ENCODE measurements at regions of chr11 and their contacts with region 1.

Region 1: GRCh38 chr11:112044961-112045360 is 19.8 kb downstream of the DLAT start:
- DNase-seq: no peak
- ATAC-seq: no peak
- H3K4me3 ChIP-seq: no peak overlapping the region
- H3K4me3 Mint-ChIP-seq: no peak overlapping the region
- H3K27ac ChIP-seq: no peak overlapping the region
- H3K27ac Mint-ChIP-seq: no peak overlapping the region
- H3K4me1 ChIP-seq: no peaks in the 10 kb centered on the region
- H3K4me1 Mint-ChIP-seq: peaks cover 15% of the 10 kb centered on the region
- H3K27me3 ChIP-seq: no peaks in the 10 kb centered on the region
- H3K27me3 Mint-ChIP-seq: no peaks in the 10 kb centered on the region
- CTCF ChIP-seq: no peak

Region 2: DNA sequence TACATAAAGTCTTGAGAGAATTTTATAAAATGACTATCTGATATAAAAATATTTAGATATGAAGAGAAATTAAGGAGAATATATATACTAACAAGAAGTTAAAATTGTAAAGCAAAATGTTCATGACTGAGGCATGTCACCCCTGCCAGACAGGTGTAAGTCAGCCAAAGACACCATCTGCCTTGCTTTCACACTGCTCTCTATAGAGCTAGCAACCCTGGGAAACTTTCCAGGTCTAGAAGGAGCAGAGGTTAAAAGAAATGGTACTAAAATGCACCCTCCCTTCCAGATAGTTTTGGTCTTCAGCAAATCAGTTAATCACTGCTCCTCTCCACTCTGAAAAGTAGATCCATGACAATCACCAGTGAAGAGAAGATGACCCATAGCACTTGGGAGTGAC is 295.3 kb before region 1 on chr11:
- CTCF ChIA-PET with region 1: no interaction called
- POLR2A ChIA-PET with region 1: no interaction called
- intact Hi-C with region 1: loop called in 1 of 2 experiments (anchors 2 kb)
- DNase-seq: no peak
- ATAC-seq: no peak
- H3K4me3 ChIP-seq: no peak overlapping the region
- H3K4me3 Mint-ChIP-seq: no peak overlapping the region
- H3K27ac ChIP-seq: no peak overlapping the region
- H3K27ac Mint-ChIP-seq: no peak overlapping the region
- H3K4me1 ChIP-seq: no peaks in the 10 kb centered on the region
- H3K4me1 Mint-ChIP-seq: no peaks in the 10 kb centered on the region
- H3K27me3 ChIP-seq: no peaks in the 10 kb centered on the region
- H3K27me3 Mint-ChIP-seq: no peaks in the 10 kb centered on the region
- CTCF ChIP-seq: no peak

Measured in CD8-positive, alpha-beta T cell (primary cell).